H1 (cell line): ENCODE measurements at regions of chr5 and their contacts with region 1.

Region 1: GRCh38 chr5:139968547-139969261 is 74.4 kb downstream of the NRG2 start:
- DNase-seq: peak; percentile 74 to 99
- H3K4me3 ChIP-seq: no peak overlapping the region
- H3K27ac ChIP-seq: no peak overlapping the region
- H3K4me1 ChIP-seq: no peaks in the 10 kb centered on the region
- H3K27me3 ChIP-seq: no peaks in the 10 kb centered on the region; a peak in 1 of 7 replicates
- CTCF ChIP-seq: peak; percentile 100
- EP300 ChIP-seq: peak in 1 of 2 experiments; percentile 55; a peak in 1 of 3 replicates
- POLR2A ChIP-seq: no peak
- RAD21 ChIP-seq: peak; percentile 99 to 100

Region 2: DNA sequence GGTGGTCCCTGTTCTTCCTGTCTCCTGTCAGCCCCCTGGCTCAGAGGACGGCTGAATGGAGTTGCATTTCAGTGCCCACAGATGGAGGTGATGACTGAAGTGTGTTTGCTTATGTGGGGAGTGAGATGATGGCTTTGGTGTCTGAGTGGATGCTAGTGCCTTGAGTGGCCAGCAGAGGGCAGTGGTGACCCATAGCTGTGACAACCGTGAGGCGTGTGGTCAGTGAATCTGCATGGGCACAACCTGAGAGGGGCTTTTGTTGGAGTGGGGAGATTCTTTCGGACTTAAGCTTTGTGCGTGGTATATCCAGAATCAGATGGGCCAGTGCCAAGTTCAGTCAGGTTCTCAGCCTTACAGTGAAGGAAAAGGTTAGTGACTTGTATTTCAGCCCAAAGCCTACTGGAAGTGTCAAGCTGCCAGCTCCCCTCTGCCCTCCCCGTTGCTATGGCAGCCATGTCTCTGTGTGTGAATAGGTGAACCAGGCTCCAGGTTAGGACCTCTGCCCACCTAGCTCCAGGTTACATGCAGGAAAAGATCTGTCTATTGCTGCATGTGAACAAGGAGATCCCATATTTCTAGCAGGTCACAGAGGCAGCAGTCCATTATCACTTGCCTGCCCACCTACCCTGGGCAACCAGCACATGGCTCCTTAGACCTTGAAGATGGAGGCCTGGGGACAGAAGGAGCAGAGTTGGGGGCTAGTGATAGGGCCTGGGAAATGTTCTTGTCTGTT is 335.2 kb before region 1 on chr5:
- CTCF ChIA-PET with region 1: interaction called, 23 read pairs
- POLR2A ChIA-PET with region 1: no interaction called
- DNase-seq: peak in 1 of 2 experiments; percentile 83
- H3K4me3 ChIP-seq: no peak overlapping the region
- H3K27ac ChIP-seq: no peak overlapping the region
- H3K4me1 ChIP-seq: peaks cover 14 to 27% (median 20%) of the 10 kb centered on the region in 4 experiments
- H3K27me3 ChIP-seq: no peaks in the 10 kb centered on the region
- CTCF ChIP-seq: peak in 2 of 3 experiments; percentile 88 to 100; a peak in 3 of 4 replicates
- EP300 ChIP-seq: no peak
- POLR2A ChIP-seq: peak in 1 of 2 experiments; percentile 34; a peak in 1 of 3 replicates
- RAD21 ChIP-seq: peak; percentile 94 to 95

Region 3: GRCh38 chr5:139795074-139796001 is 173.4 kb before region 1 on chr5 and contains the start of gene PSD2:
- CTCF ChIA-PET with region 1: interaction called, 276 read pairs
- POLR2A ChIA-PET with region 1: no interaction called
- DNase-seq: peak in 1 of 2 experiments; percentile 73
- H3K4me3 ChIP-seq: peak within 1 kb of the TSS; percentile 35 to 81 (median 50)
- H3K27ac ChIP-seq: no peak within 1 kb of the TSS
- H3K4me1 ChIP-seq: peaks cover 2 to 7% (median 2%) of the 10 kb centered on the region in 4 experiments; a peak in 3 of 7 replicates
- H3K27me3 ChIP-seq: peaks cover 41 to 74% (median 61%) of the 10 kb centered on the region in 4 experiments
- CTCF ChIP-seq: no peak
- EP300 ChIP-seq: no peak
- POLR2A ChIP-seq: no peak
- RAD21 ChIP-seq: no peak
- total RNA-seq, gene PSD2: 0.06 and 0.13 TPM in 2 replicates

Region 4: GRCh38 chr5:139863855-139864558 is 104.7 kb before region 1 on chr5:
- CTCF ChIA-PET with region 1: interaction called, 173 read pairs
- POLR2A ChIA-PET with region 1: no interaction called
- DNase-seq: peak in 1 of 2 experiments; percentile 89
- H3K4me3 ChIP-seq: no peak overlapping the region
- H3K27ac ChIP-seq: no peak overlapping the region
- H3K4me1 ChIP-seq: no peaks in the 10 kb centered on the region
- H3K27me3 ChIP-seq: no peaks in the 10 kb centered on the region
- CTCF ChIP-seq: peak; percentile 72 to 89 (median 84)
- EP300 ChIP-seq: no peak
- POLR2A ChIP-seq: no peak
- RAD21 ChIP-seq: peak; percentile 79 to 86

Region 5: GRCh38 chr5:139903795-139904565 is 64.7 kb before region 1 on chr5:
- CTCF ChIA-PET with region 1: interaction called, 181 read pairs
- POLR2A ChIA-PET with region 1: interaction called, 5 read pairs
- DNase-seq: peak in 1 of 2 experiments; percentile 78
- H3K4me3 ChIP-seq: peak overlapping the region; percentile 37 to 81 (median 59)
- H3K27ac ChIP-seq: no peak overlapping the region
- H3K4me1 ChIP-seq: peaks cover 0 to 23% (median 10%) of the 10 kb centered on the region in 4 experiments; a peak in 6 of 7 replicates
- H3K27me3 ChIP-seq: peaks cover 35 to 77% (median 59%) of the 10 kb centered on the region in 4 experiments
- CTCF ChIP-seq: no peak
- EP300 ChIP-seq: no peak
- POLR2A ChIP-seq: no peak
- RAD21 ChIP-seq: no peak

Region 6: GRCh38 chr5:139949710-139950109 is 19.0 kb before region 1 on chr5:
- CTCF ChIA-PET with region 1: interaction called, 156 read pairs
- POLR2A ChIA-PET with region 1: interaction called, 5 read pairs
- DNase-seq: peak in 1 of 2 experiments; percentile 40
- H3K4me3 ChIP-seq: no peak overlapping the region
- H3K27ac ChIP-seq: no peak overlapping the region
- H3K4me1 ChIP-seq: peaks cover 0 to 5% (median 2%) of the 10 kb centered on the region in 4 experiments; a peak in 2 of 7 replicates
- H3K27me3 ChIP-seq: no peaks in the 10 kb centered on the region; a peak in 1 of 7 replicates
- CTCF ChIP-seq: no peak
- EP300 ChIP-seq: no peak
- POLR2A ChIP-seq: no peak
- RAD21 ChIP-seq: no peak

Region 7: GRCh38 chr5:140042643-140043500 is 74.2 kb after region 1 on chr5 and contains the start of gene NRG2:
- CTCF ChIA-PET with region 1: interaction called, 19 read pairs
- POLR2A ChIA-PET with region 1: no interaction called
- DNase-seq: peak; percentile 46 to 87
- H3K4me3 ChIP-seq: peak within 1 kb of the TSS; percentile 33 to 67 (median 50)
- H3K27ac ChIP-seq: no peak within 1 kb of the TSS
- H3K4me1 ChIP-seq: peaks cover 0 to 11% (median 2%) of the 10 kb centered on the region in 4 experiments; a peak in 6 of 7 replicates
- H3K27me3 ChIP-seq: peaks cover 33 to 74% (median 58%) of the 10 kb centered on the region in 4 experiments
- CTCF ChIP-seq: peak; percentile 67 to 89 (median 68)
- EP300 ChIP-seq: no peak
- POLR2A ChIP-seq: no peak
- RAD21 ChIP-seq: 0 out of 4 replicates have a peak, but pooled peaks have one; percentile 1 to 18
- total RNA-seq, gene NRG2: 0.21 and 0.54 TPM in 2 replicates

Region 8: GRCh38 chr5:140214831-140215230 is 246.1 kb after region 1 on chr5:
- CTCF ChIA-PET with region 1: no interaction called
- POLR2A ChIA-PET with region 1: no interaction called
- DNase-seq: no peak
- H3K4me3 ChIP-seq: no peak overlapping the region
- H3K27ac ChIP-seq: no peak overlapping the region
- H3K4me1 ChIP-seq: peaks cover 0 to 4% (median 0%) of the 10 kb centered on the region in 4 experiments; a peak in 1 of 7 replicates
- H3K27me3 ChIP-seq: no peaks in the 10 kb centered on the region
- CTCF ChIP-seq: no peak
- EP300 ChIP-seq: no peak
- POLR2A ChIP-seq: no peak
- RAD21 ChIP-seq: no peak